Activated CD4-positive, alpha-beta T cell treated with anti-CD3 and anti-CD28 coated beads for 36 hours (primary cell): ENCODE measurements at regions of chr16 and their contacts with region 1.

Region 1: DNA sequence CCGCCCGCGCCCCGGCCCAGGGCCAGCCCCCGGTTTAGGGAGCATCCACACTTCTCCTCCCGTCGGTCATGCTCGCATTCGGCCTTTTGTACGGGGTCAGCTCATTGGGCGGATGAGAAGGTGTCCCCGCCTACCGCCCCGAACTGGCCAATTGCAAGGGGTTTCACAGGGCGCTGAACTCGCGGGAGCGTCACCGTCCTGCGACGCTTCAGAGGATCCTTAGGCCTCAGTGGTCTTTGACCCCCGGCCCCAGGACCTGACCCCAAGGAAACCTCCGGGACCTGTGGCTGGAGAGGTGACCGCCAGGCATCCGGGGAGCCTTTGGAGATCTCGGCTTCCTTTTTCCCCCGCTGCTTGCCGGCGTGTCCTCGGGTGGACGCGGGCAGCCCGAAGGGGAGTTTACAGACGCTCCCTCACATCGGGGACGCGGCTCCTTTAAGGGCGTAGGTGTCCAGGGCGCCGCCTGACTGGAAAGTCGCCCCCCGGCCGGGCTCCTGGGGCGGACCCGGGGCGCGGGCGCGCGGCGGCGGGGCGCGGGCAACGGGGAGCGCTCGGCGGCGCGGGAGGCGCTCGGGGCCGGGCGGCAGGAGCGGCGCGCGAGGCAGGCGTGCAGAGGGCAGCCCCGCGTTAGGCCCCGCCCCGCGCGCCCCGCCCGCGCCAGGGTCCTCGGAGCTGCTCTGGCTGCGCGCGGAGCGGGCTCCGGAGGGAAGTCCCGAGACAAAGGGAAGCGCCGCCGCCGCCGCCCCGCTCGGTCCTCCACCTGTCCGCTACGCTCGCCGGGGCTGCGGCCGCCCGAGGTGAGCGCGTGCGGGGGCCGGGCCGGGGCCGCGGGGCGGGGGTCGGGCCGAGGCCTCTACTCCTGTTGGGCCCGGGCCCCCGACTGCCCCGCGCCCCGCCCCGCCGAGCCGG is at the start of gene UBE2I:
- DNase-seq: peak; percentile 98
- ATAC-seq: peak; percentile 67
- H3K4me3 Mint-ChIP-seq: peak within 1 kb of the TSS; percentile 97
- H3K27ac Mint-ChIP-seq: peak within 1 kb of the TSS; percentile 99
- H3K4me1 Mint-ChIP-seq: peaks cover 47% of the 10 kb centered on the region
- H3K27me3 Mint-ChIP-seq: no peaks in the 10 kb centered on the region
- total RNA-seq, gene UBE2I: 251 to 358 TPM

Region 2: GRCh38 chr16:589658-590159 is 719.5 kb before region 1 on chr16 and contains the start of gene RAB40C:
- CTCF ChIA-PET with region 1: no interaction called
- POLR2A ChIA-PET with region 1: no interaction called
- intact Hi-C with region 1: loop called in 1 of 2 experiments (anchors 1 kb)
- DNase-seq: peak; percentile 100
- ATAC-seq: peak; percentile 88
- H3K4me3 Mint-ChIP-seq: peak within 1 kb of the TSS; percentile 79
- H3K27ac Mint-ChIP-seq: peak within 1 kb of the TSS; percentile 100
- H3K4me1 Mint-ChIP-seq: peaks cover 22% of the 10 kb centered on the region
- H3K27me3 Mint-ChIP-seq: no peaks in the 10 kb centered on the region
- total RNA-seq, gene RAB40C: 8.9 to 9.6 TPM

Region 3: DNA sequence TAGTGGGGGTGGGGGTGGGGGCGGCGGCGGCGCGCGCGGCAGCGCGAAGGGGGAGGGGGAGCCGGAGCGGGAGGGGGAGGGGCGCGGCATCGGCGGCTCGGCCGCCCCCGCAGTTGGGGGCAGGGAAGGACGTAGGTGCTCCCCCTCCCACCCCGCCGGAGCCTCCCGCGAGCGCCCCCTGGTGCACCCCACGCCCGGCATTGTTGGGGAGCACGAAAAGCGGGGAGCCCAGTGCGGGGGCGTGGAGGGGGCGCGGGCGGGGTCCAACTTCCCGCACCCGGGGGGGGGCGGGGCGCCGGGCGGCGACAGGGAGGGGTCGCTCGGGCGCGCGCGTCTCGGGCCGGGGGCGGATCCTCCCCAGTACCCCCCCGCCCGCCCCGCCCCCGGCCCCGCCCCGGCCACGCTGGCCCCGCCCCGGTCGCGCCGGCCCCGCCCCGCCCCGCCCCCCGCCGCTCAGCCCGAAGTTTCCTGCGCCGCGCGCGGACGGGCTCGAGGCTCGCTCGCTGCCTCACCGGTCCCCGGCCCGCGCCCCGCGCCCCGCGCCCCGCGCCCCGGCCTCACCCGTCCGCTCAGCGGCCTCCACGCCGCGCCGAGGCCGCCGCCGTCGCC is 156.5 kb before region 1 on chr16 and contains the start of gene CACNA1H:
- CTCF ChIA-PET with region 1: no interaction called
- POLR2A ChIA-PET with region 1: no interaction called
- intact Hi-C with region 1: loop called in 1 of 2 experiments (anchors 2 kb)
- DNase-seq: peak; percentile 82
- ATAC-seq: peak; percentile 68
- H3K4me3 Mint-ChIP-seq: peak within 1 kb of the TSS; percentile 41
- H3K27ac Mint-ChIP-seq: no peak within 1 kb of the TSS
- H3K4me1 Mint-ChIP-seq: peaks cover 2% of the 10 kb centered on the region
- H3K27me3 Mint-ChIP-seq: peaks cover 7% of the 10 kb centered on the region
- total RNA-seq, gene CACNA1H: 0.86 to 0.98 TPM

Region 4: GRCh38 chr16:1413684-1414531 is 104.7 kb after region 1 on chr16:
- CTCF ChIA-PET with region 1: interaction called, 3 read pairs
- POLR2A ChIA-PET with region 1: no interaction called
- intact Hi-C with region 1: loop called in 1 of 2 experiments (anchors 1 kb)
- DNase-seq: peak; percentile 85
- ATAC-seq: peak; percentile 72
- H3K4me3 Mint-ChIP-seq: peak overlapping the region; percentile 81
- H3K27ac Mint-ChIP-seq: peak overlapping the region; percentile 81
- H3K4me1 Mint-ChIP-seq: peaks cover 24% of the 10 kb centered on the region
- H3K27me3 Mint-ChIP-seq: no peaks in the 10 kb centered on the region

Region 5: DNA sequence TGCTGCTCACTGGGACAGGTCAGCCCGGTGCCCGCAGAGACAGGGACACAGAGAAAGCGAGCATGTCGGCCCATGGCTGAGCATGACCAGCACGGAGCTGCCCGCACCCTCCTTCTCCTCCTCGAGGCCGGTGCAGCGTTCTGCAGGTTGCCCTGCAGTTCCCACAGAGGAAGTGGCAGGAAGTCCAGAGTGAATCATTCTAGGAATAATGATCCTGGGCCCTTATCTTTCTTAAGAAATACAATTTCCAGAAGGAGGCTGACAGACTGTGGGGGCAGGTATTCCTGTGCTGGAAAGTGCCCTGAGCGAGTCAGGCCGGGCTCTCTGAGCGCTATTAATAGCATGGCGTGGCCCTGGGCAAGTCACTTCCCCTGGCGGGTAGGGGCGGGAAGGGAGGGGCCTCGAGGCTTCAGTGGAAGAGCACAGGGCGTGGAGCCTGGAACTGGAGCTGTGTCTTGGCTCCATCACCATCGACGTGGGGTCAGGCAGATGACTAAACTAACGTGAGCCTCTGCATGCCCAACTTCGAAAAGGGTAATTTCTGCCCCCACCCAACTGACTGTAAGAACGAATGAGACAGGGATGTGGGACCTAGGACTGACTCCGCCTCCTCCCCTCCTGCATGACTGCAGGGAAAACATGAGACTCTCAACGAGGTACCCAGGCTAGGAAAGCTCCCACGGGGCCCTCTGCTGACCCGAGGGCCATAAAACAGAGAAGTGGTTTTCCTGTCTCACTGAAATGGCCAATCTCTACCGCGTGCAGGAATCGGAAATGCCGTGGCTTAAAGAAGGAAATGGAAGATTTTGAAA is 234.1 kb after region 1 on chr16:
- CTCF ChIA-PET with region 1: no interaction called
- POLR2A ChIA-PET with region 1: no interaction called
- intact Hi-C with region 1: loop called in 1 of 2 experiments (anchors 2 kb)
- DNase-seq: peak; percentile 84
- ATAC-seq: peak; percentile 85
- H3K4me3 Mint-ChIP-seq: peak overlapping the region; percentile 71
- H3K27ac Mint-ChIP-seq: peak overlapping the region; percentile 99
- H3K4me1 Mint-ChIP-seq: peaks cover 78% of the 10 kb centered on the region
- H3K27me3 Mint-ChIP-seq: no peaks in the 10 kb centered on the region

Region 6: DNA sequence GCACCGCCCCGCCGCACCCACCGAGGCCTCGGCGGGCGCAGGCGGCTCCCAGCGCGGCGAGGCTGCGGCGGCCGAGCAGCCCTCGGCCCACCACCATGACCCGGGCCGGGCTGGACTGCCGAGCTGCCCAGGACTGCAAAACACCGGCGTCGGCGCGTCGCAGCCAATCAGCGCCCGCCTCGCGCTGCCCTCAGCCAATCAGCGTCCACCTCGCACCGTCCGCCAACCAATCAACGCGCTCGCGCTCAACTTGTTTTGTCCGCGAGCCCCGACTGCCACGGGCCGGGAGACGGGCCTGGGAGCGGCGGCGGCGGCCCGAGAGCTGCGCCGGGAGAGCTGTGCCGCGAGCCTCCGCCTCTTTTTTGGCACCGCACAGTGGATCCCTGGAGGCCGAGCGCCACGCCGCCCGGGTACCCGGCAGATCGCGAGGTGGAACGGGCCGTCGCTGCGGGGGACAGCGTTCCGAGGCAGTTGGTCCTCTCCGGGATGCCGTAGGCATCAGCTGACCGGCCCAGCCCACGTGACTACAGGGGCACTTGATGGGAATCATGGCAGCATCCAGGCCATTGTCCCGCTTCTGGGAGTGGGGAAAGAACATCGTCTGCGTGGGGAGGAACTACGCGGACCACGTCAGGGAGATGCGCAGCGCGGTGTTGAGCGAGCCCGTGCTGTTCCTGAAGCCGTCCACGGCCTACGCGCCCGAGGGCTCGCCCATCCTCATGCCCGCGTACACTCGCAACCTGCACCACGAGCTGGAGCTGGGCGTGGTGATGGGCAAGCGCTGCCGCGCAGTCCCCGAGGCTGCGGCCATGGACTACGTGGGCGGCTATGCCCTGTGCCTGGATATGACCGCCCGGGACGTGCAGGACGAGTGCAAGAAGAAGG is 517.7 kb after region 1 on chr16 and contains the starts of genes FAHD1 and HAGH:
- CTCF ChIA-PET with region 1: no interaction called
- POLR2A ChIA-PET with region 1: no interaction called
- intact Hi-C with region 1: loop called in 1 of 2 experiments (anchors 1 kb)
- DNase-seq: peak; percentile 93
- ATAC-seq: peak; percentile 90
- H3K4me3 Mint-ChIP-seq: peak within 1 kb of the TSS; percentile 91
- H3K27ac Mint-ChIP-seq: peak within 1 kb of the TSS; percentile 89
- H3K4me1 Mint-ChIP-seq: peaks cover 27% of the 10 kb centered on the region
- H3K27me3 Mint-ChIP-seq: no peaks in the 10 kb centered on the region
- total RNA-seq, gene FAHD1: 11.6 to 11.9 TPM
- total RNA-seq, gene HAGH: 20.9 to 25.0 TPM